PC-9 (cell line): ENCODE measurements at regions of chrX and their contacts with region 1.

Region 1: GRCh38 chrX:129493643-129494042 is 29.6 kb downstream of the SMARCA1 start:
- DNase-seq: no peak
- H3K4me3 ChIP-seq: no peak overlapping the region
- H3K27ac ChIP-seq: no peak overlapping the region
- H3K4me1 ChIP-seq: no peaks in the 10 kb centered on the region
- H3K27me3 ChIP-seq: no peaks in the 10 kb centered on the region
- CTCF ChIP-seq: no peak

Region 2: GRCh38 chrX:131331152-131331551 is 1837.5 kb after region 1 on chrX:
- CTCF ChIA-PET with region 1: no interaction called
- POLR2A ChIA-PET with region 1: interaction called, 14 read pairs
- intact Hi-C with region 1: no loop called
- DNase-seq: no peak
- H3K4me3 ChIP-seq: no peak overlapping the region
- H3K27ac ChIP-seq: no peak overlapping the region
- H3K4me1 ChIP-seq: no peaks in the 10 kb centered on the region
- H3K27me3 ChIP-seq: no peaks in the 10 kb centered on the region
- CTCF ChIP-seq: no peak